ENCODE measurements at regions of chr11 and their contacts with region 1.

Region 1: GRCh38 chr11:117107701-117108590 is 9.7 kb upstream of the SIK3 start:
- DNase-seq: no peak
- H3K4me3 ChIP-seq: no peak overlapping the region
- H3K27me3 ChIP-seq: no peaks in the 10 kb centered on the region
- CTCF ChIP-seq: no peak

Region 2: GRCh38 chr11:116732271-116733042 is 375.5 kb before region 1 on chr11:
- CTCF ChIA-PET with region 1: interaction called, 18 read pairs
- POLR2A ChIA-PET with region 1: no interaction called
- DNase-seq: no peak
- H3K4me3 ChIP-seq: no peak overlapping the region
- H3K27me3 ChIP-seq: peaks cover 25% of the 10 kb centered on the region
- CTCF ChIP-seq: peak; percentile 90

Region 3: DNA sequence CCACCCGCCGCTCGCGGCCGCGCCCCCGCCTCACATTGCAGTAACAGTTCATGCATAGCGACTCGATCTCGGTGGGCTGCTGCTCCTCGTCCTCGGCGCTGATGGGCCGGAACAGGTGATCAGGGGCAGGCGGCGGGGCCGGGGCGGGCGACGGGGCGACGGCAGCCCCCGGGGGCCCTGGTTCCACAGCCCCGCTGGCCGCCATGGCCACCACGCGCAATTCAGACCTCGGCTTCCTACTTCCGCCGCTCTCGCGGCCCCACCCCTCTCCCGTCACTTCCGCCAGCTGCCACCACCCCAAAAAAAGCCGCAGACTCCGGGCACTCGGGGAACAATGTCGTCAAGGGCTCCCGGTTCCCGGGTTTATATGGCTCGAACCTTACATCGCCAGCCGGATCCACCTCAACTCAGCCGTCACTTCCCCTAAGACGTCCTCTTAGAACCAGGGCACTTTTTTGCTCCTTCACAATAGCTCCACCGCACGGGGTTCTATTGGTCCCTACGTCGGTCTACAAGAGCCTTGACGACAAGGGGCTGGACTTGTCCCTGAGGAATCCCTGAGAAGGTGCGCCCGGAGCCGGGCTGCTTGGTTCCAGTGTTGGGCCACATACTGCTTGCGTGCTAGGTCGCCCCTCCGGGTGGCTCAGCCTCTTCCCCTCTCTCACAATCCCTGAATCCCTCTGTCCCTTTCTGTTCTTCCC is 320.0 kb before region 1 on chr11 and contains the start of gene ZPR1:
- CTCF ChIA-PET with region 1: interaction called, 165 read pairs
- POLR2A ChIA-PET with region 1: no interaction called
- DNase-seq: peak; percentile 18
- H3K4me3 ChIP-seq: peak within 1 kb of the TSS; percentile 80
- H3K27me3 ChIP-seq: no peaks in the 10 kb centered on the region
- CTCF ChIP-seq: no peak
- polyA plus RNA-seq, gene ZPR1: 51.0 and 63.8 TPM in 2 replicates

Region 4: GRCh38 chr11:116835791-116836631 is 271.9 kb before region 1 on chr11:
- CTCF ChIA-PET with region 1: interaction called, 16 read pairs
- POLR2A ChIA-PET with region 1: no interaction called
- DNase-seq: peak; percentile 75
- H3K4me3 ChIP-seq: peak overlapping the region; percentile 22; the same call in 1 of the 2 replicates
- H3K27me3 ChIP-seq: no peaks in the 10 kb centered on the region
- CTCF ChIP-seq: peak; percentile 75

Region 5: GRCh38 chr11:116879800-116880625 is 227.9 kb before region 1 on chr11:
- CTCF ChIA-PET with region 1: interaction called, 71 read pairs
- POLR2A ChIA-PET with region 1: interaction called, 12 read pairs
- DNase-seq: no peak
- H3K4me3 ChIP-seq: no peak overlapping the region
- H3K27me3 ChIP-seq: no peaks in the 10 kb centered on the region
- CTCF ChIP-seq: peak; percentile 81

Region 6: GRCh38 chr11:117122556-117122955 is 14.6 kb after region 1 on chr11:
- CTCF ChIA-PET with region 1: interaction called, 13 read pairs
- POLR2A ChIA-PET with region 1: no interaction called
- DNase-seq: no peak
- H3K4me3 ChIP-seq: no peak overlapping the region
- H3K27me3 ChIP-seq: peaks cover 5% of the 10 kb centered on the region
- CTCF ChIP-seq: no peak

Region 7: GRCh38 chr11:117226388-117227385 is 118.7 kb after region 1 on chr11:
- CTCF ChIA-PET with region 1: interaction called, 25 read pairs
- POLR2A ChIA-PET with region 1: no interaction called
- DNase-seq: no peak
- H3K4me3 ChIP-seq: no peak overlapping the region
- H3K27me3 ChIP-seq: no peaks in the 10 kb centered on the region
- CTCF ChIP-seq: peak; percentile 77

Measured in BJ (cell line).